Cardiac septum (tissue), 1 donor: ENCODE measurements at regions of chr9 and their contacts with region 1.

Region 1: GRCh38 chr9:88651682-88652633 is 117.0 kb downstream of the NXNL2 start:
- DNase-seq: peak; percentile 83

Region 2: DNA sequence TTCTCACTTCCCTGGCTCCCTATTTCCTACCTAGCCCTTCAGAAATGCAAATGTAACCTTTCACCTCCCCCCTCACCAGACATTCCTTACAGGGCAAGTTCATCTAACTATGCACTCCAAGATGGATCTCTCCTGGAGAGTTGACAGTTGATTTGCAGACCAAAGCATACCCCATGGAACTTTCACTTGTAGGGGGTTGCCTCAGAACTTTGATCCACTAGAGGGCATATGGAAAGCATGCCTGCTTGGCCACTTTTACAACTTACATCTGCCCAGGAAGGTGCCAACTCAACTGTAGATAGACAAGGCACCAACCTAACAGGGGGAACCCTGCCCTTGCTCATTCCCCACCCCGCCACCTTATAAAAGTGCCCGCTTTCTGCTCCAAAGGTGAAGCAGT is 70.8 kb after region 1 on chr9:
- intact Hi-C with region 1: no loop called
- DNase-seq: no peak

Region 3: GRCh38 chr9:88753691-88754367 is 101.9 kb after region 1 on chr9:
- intact Hi-C with region 1: loop called (anchors 10 kb)
- DNase-seq: no peak